ENCODE measurements at regions of chr14 and their contacts with region 1.

Region 1: GRCh38 chr14:101707068-101707842 is 54.3 kb upstream of the PPP2R5C start:
- DNase-seq: peak; percentile 33 to 87 (median 79)
- ATAC-seq: peak; percentile 83
- H3K4me3 ChIP-seq: peak overlapping the region; percentile 8
- H3K4me3 Mint-ChIP-seq: peak overlapping the region; percentile 32 to 83 (median 75)
- H3K27ac ChIP-seq: peak overlapping the region; percentile 82
- H3K27ac Mint-ChIP-seq: peak overlapping the region; percentile 36 to 95 (median 90)
- H3K4me1 ChIP-seq: peaks cover 24 to 39% of the 10 kb centered on the region in 2 donors
- H3K4me1 Mint-ChIP-seq: peaks cover 17 to 48% (median 35%) of the 10 kb centered on the region in 7 donors
- H3K27me3 ChIP-seq: no peaks in the 10 kb centered on the region
- H3K27me3 Mint-ChIP-seq: peaks cover 0 to 25% (median 0%) of the 10 kb centered on the region in 5 donors

Region 2: GRCh38 chr14:101721951-101722661 is 14.9 kb after region 1 on chr14:
- CTCF ChIA-PET with region 1: interaction called, 15 read pairs
- POLR2A ChIA-PET with region 1: interaction called, 30 read pairs
- intact Hi-C with region 1: loop called (anchors 1 kb)
- DNase-seq: peak; percentile 49 to 93 (median 88)
- ATAC-seq: peak; percentile 86
- H3K4me3 ChIP-seq: peak overlapping the region; percentile 24
- H3K4me3 Mint-ChIP-seq: peak overlapping the region; percentile 73 to 92 (median 80)
- H3K27ac ChIP-seq: peak overlapping the region; percentile 76
- H3K27ac Mint-ChIP-seq: peak overlapping the region; percentile 92 to 99 (median 97)
- H3K4me1 ChIP-seq: peaks cover 34 to 50% of the 10 kb centered on the region in 2 donors
- H3K4me1 Mint-ChIP-seq: peaks cover 17 to 74% (median 52%) of the 10 kb centered on the region in 7 donors
- H3K27me3 ChIP-seq: no peaks in the 10 kb centered on the region
- H3K27me3 Mint-ChIP-seq: no peaks in the 10 kb centered on the region

Region 3: GRCh38 chr14:101767618-101768362 is 60.5 kb after region 1 on chr14:
- CTCF ChIA-PET with region 1: interaction called, 56 read pairs
- POLR2A ChIA-PET with region 1: interaction called, 38 read pairs
- intact Hi-C with region 1: loop called (anchors 1 to 2 kb)
- DNase-seq: no peak
- ATAC-seq: no peak
- H3K4me3 ChIP-seq: no peak overlapping the region
- H3K4me3 Mint-ChIP-seq: no peak overlapping the region
- H3K27ac ChIP-seq: no peak overlapping the region
- H3K27ac Mint-ChIP-seq: peak overlapping the region in 3 of 9 donors; percentile 2 to 43 (median 6)
- H3K4me1 ChIP-seq: peaks cover 9 to 11% of the 10 kb centered on the region in 2 donors
- H3K4me1 Mint-ChIP-seq: peaks cover 28 to 52% (median 38%) of the 10 kb centered on the region in 7 donors
- H3K27me3 ChIP-seq: no peaks in the 10 kb centered on the region
- H3K27me3 Mint-ChIP-seq: no peaks in the 10 kb centered on the region

Region 4: GRCh38 chr14:101823511-101824120 is 116.4 kb after region 1 on chr14:
- CTCF ChIA-PET with region 1: interaction called, 3 read pairs
- POLR2A ChIA-PET with region 1: interaction called, 21 read pairs
- intact Hi-C with region 1: loop called (anchors 1 to 5 kb)
- DNase-seq: peak in 8 of 9 donors; percentile 71 to 87 (median 82)
- ATAC-seq: peak; percentile 72
- H3K4me3 ChIP-seq: peak overlapping the region; percentile 67
- H3K4me3 Mint-ChIP-seq: peak overlapping the region; percentile 85 to 96 (median 90)
- H3K27ac ChIP-seq: peak overlapping the region; percentile 97
- H3K27ac Mint-ChIP-seq: peak overlapping the region; percentile 90 to 100 (median 99)
- H3K4me1 ChIP-seq: peaks cover 64 to 68% of the 10 kb centered on the region in 2 donors
- H3K4me1 Mint-ChIP-seq: peaks cover 65 to 91% (median 86%) of the 10 kb centered on the region in 7 donors
- H3K27me3 ChIP-seq: no peaks in the 10 kb centered on the region
- H3K27me3 Mint-ChIP-seq: peaks cover 0 to 2% (median 0%) of the 10 kb centered on the region in 5 donors

Region 5: DNA sequence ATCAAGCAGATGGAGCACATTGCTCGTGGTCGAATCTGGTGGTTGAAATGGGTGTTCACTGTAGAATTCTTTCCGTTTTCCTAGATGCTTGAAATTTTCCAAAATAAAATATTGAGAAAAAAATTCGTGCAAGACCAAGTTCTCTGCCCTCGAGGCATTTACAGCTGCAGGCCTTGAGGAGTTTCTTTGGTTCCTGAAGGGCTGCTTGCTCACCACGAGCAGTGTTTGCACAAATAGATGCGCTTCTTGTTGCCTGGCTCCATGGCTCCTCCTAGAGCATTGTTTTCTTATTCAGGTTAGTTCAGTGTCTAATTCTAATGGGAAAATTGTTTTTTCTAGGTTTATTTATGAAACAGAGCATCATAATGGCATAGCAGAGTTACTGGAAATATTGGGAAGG is 182.6 kb after region 1 on chr14:
- CTCF ChIA-PET with region 1: interaction called, 3 read pairs
- POLR2A ChIA-PET with region 1: no interaction called
- intact Hi-C with region 1: loop called in 1 of 2 experiments (anchors 2 kb)
- DNase-seq: peak in 3 of 9 donors; percentile 12 to 26 (median 16)
- ATAC-seq: no peak
- H3K4me3 ChIP-seq: no peak overlapping the region
- H3K4me3 Mint-ChIP-seq: no peak overlapping the region
- H3K27ac ChIP-seq: no peak overlapping the region
- H3K27ac Mint-ChIP-seq: peak overlapping the region in 7 of 9 donors; percentile 7 to 68 (median 54)
- H3K4me1 ChIP-seq: no peaks in the 10 kb centered on the region
- H3K4me1 Mint-ChIP-seq: peaks cover 0 to 5% (median 0%) of the 10 kb centered on the region in 7 donors
- H3K27me3 ChIP-seq: no peaks in the 10 kb centered on the region
- H3K27me3 Mint-ChIP-seq: no peaks in the 10 kb centered on the region

Region 6: GRCh38 chr14:102020058-102020971 is 313.1 kb after region 1 on chr14:
- CTCF ChIA-PET with region 1: no interaction called
- POLR2A ChIA-PET with region 1: no interaction called
- intact Hi-C with region 1: loop called in 1 of 2 experiments (anchors 1 kb)
- DNase-seq: peak in 8 of 9 donors; percentile 35 to 71 (median 60)
- ATAC-seq: peak; percentile 82
- H3K4me3 ChIP-seq: no peak overlapping the region
- H3K4me3 Mint-ChIP-seq: peak overlapping the region; percentile 9 to 81 (median 60)
- H3K27ac ChIP-seq: peak overlapping the region; percentile 51
- H3K27ac Mint-ChIP-seq: peak overlapping the region; percentile 76 to 94 (median 89)
- H3K4me1 ChIP-seq: peaks cover 0 to 14% of the 10 kb centered on the region in 2 donors
- H3K4me1 Mint-ChIP-seq: peaks cover 11 to 23% (median 15%) of the 10 kb centered on the region in 7 donors
- H3K27me3 ChIP-seq: no peaks in the 10 kb centered on the region
- H3K27me3 Mint-ChIP-seq: no peaks in the 10 kb centered on the region

Region 7: DNA sequence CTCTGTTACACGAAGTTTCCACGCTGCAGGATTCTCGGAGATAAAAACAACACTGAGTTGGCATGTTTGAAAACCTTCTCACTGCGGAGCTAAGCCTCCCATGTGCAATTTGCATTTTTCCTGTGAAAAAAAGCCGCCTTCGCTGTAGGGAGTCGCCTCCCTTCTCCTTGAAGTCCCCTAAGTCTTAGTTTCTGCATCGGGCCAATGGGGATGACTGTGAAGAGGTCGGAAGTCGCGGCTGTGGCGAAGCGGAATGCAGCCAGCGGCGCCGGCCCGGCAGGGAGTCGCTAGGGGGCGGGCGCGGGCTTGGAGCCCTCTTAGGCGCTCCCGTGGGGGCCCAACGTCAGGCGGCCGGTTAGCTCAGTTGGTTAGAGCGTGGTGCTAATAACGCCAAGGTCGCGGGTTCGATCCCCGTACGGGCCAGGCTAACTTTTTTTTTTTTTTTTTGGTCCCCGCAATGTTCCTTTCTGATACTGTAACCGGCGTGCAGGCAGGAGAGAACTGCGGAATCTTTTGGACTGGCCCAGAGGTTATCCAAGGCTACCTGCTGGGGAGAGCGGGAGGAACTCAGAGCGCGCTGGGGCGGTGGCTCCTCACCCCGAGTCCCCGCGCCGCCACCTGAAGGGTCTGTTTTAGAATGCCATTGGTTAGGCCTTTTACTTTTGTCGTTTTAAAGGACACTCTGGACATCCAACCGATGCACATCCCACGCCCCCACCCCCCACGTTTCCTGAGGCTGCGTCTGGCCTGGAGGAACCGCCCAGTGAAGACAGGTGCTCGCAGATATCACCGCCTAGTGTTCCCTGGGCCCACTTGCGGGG is 609.7 kb after region 1 on chr14:
- CTCF ChIA-PET with region 1: no interaction called
- POLR2A ChIA-PET with region 1: interaction called, 3 read pairs
- intact Hi-C with region 1: loop called (anchors 1 to 5 kb)
- DNase-seq: peak; percentile 90 to 99 (median 95)
- ATAC-seq: peak; percentile 77
- H3K4me3 ChIP-seq: peak overlapping the region; percentile 84
- H3K4me3 Mint-ChIP-seq: peak overlapping the region; percentile 91 to 99 (median 97)
- H3K27ac ChIP-seq: peak overlapping the region; percentile 62
- H3K27ac Mint-ChIP-seq: peak overlapping the region; percentile 95 to 99 (median 98)
- H3K4me1 ChIP-seq: peaks cover 37 to 43% of the 10 kb centered on the region in 2 donors
- H3K4me1 Mint-ChIP-seq: peaks cover 34 to 76% (median 64%) of the 10 kb centered on the region in 7 donors
- H3K27me3 ChIP-seq: no peaks in the 10 kb centered on the region
- H3K27me3 Mint-ChIP-seq: peaks cover 0 to 6% (median 0%) of the 10 kb centered on the region in 5 donors

Measured in naive thymus-derived CD4-positive, alpha-beta T cell (primary cell).